Caco-2 (cell line): ENCODE measurements at regions of chr20 and their contacts with region 1.

Region 1: DNA sequence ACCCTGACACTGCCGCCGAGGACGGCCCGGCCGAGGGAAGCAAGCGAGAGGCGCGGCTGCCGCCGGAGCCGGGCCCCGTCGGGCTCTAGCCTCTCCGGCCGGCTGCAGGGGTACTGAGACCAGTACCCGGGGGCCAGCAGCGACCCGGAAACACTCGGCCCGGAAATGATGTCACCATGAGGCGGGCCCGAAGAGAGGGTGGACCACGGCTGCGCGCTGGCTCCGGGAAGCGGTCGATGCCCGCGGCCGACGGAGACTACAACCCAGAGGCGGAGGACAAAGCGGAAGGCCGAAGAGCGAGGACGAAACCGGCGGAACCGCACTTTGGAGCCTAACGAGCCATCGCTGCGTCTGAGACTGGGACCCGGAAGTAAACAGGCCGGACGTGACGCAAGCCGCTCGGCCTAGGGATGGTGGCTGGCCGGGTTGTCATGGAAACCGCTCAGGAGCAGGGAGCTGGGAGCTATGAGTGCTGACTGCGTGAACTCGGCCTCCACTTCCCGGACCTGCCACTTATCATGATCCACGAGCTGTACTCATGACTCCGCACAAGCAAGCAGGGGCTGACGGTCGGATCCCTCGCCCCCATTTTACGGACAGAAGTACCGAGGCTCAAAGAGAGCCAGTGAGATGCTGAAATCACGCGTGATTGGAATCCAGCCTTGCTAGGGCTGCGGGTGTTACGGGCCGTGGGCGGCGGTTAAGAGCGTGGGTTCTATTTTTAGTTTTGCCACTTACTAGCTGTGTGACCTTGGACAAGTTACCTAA is at the start of gene SPATA2:
- DNase-seq: peak; percentile 100
- H3K4me3 ChIP-seq: peak within 1 kb of the TSS; percentile 80
- H3K4me3 Mint-ChIP-seq: peak within 1 kb of the TSS; percentile 99
- H3K27ac Mint-ChIP-seq: peak within 1 kb of the TSS; percentile 100
- H3K4me1 ChIP-seq: peaks cover 20% of the 10 kb centered on the region
- H3K4me1 Mint-ChIP-seq: peaks cover 25% of the 10 kb centered on the region
- H3K27me3 ChIP-seq: no peaks in the 10 kb centered on the region
- H3K27me3 Mint-ChIP-seq: no peaks in the 10 kb centered on the region
- CTCF ChIP-seq: no peak
- total RNA-seq, gene SPATA2: 29.0 TPM in 2 replicates

Region 2: DNA sequence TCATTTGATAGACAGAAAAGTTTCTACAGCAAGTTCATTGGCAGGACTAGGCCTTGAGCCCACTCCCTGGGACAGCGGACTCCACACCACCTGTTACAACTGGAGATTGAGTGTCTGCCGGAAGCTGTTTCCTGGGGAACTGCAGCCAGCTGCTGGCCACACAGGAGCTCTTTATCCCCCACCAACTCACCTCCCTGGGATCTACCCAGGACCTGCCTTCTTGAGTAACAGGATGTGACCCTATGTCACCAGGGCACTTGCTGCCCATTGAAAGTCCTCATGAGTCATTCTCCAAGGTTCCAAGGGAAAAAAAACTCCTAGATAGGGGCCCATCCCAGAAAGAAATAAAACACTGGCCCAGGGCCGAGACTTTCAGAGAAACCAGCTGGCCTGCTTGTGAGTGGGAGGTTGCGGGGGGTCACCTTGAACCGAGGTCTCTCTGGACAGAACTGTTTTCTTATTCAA is 140.3 kb before region 1 on chr20:
- CTCF ChIA-PET with region 1: no interaction called
- POLR2A ChIA-PET with region 1: interaction called, 10 read pairs
- intact Hi-C with region 1: no loop called
- DNase-seq: peak; percentile 68 to 90
- H3K4me3 ChIP-seq: no peak overlapping the region
- H3K4me3 Mint-ChIP-seq: no peak overlapping the region
- H3K27ac Mint-ChIP-seq: no peak overlapping the region
- H3K4me1 ChIP-seq: peaks cover 23% of the 10 kb centered on the region
- H3K4me1 Mint-ChIP-seq: peaks cover 15% of the 10 kb centered on the region
- H3K27me3 ChIP-seq: no peaks in the 10 kb centered on the region
- H3K27me3 Mint-ChIP-seq: no peaks in the 10 kb centered on the region
- CTCF ChIP-seq: no peak

Region 3: GRCh38 chr20:49901588-49901987 is 14.0 kb before region 1 on chr20:
- CTCF ChIA-PET with region 1: interaction called, 7 read pairs
- POLR2A ChIA-PET with region 1: interaction called, 13 read pairs
- intact Hi-C with region 1: no loop called
- DNase-seq: peak in 1 of 2 experiments; percentile 30
- H3K4me3 ChIP-seq: no peak overlapping the region
- H3K4me3 Mint-ChIP-seq: no peak overlapping the region
- H3K27ac Mint-ChIP-seq: no peak overlapping the region
- H3K4me1 ChIP-seq: no peaks in the 10 kb centered on the region
- H3K4me1 Mint-ChIP-seq: no peaks in the 10 kb centered on the region
- H3K27me3 ChIP-seq: no peaks in the 10 kb centered on the region
- H3K27me3 Mint-ChIP-seq: no peaks in the 10 kb centered on the region
- CTCF ChIP-seq: no peak

Region 4: DNA sequence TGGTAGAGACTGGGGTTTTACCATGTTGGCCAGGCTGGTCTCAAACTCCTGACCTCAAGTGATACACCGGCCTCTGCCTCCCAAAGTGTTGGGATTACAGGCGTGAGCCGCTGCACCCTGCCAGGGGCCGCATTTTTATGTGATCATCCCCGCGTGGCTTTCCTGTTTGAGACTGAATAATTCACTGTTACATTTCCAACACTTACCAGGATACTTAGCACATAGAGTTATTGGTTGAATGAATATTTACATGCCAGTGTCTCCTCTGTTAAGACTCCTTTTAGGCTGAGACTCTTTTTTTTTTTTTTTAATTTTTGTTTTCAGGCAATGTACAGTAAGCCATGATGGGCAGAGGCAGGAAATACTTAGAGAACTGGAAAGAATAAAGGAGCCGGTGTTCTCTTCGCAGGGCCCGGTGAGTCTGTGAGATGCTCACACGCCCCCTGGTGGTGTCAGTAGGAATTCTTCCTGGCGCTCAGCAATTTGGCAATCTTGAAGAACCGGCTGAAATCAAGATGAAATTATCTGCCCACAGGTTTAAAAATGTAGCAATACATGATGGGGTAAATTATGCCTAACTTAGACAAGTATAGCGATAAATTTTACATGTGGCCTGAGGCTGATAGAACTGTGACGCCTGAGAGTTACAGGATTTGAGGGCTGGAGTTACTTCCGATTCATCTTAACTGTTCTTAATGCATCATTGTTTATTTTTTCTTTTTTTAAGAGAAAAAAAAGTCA is 13.0 kb after region 1 on chr20:
- CTCF ChIA-PET with region 1: interaction called, 5 read pairs
- POLR2A ChIA-PET with region 1: interaction called, 4 read pairs
- intact Hi-C with region 1: loop called (anchors 1 kb)
- DNase-seq: peak; percentile 90 to 96
- H3K4me3 ChIP-seq: no peak overlapping the region
- H3K4me3 Mint-ChIP-seq: no peak overlapping the region
- H3K27ac Mint-ChIP-seq: no peak overlapping the region
- H3K4me1 ChIP-seq: no peaks in the 10 kb centered on the region; the same call in 1 of the 2 replicates
- H3K4me1 Mint-ChIP-seq: peaks cover 2% of the 10 kb centered on the region
- H3K27me3 ChIP-seq: no peaks in the 10 kb centered on the region
- H3K27me3 Mint-ChIP-seq: no peaks in the 10 kb centered on the region
- CTCF ChIP-seq: peak; percentile 99

Region 5: DNA sequence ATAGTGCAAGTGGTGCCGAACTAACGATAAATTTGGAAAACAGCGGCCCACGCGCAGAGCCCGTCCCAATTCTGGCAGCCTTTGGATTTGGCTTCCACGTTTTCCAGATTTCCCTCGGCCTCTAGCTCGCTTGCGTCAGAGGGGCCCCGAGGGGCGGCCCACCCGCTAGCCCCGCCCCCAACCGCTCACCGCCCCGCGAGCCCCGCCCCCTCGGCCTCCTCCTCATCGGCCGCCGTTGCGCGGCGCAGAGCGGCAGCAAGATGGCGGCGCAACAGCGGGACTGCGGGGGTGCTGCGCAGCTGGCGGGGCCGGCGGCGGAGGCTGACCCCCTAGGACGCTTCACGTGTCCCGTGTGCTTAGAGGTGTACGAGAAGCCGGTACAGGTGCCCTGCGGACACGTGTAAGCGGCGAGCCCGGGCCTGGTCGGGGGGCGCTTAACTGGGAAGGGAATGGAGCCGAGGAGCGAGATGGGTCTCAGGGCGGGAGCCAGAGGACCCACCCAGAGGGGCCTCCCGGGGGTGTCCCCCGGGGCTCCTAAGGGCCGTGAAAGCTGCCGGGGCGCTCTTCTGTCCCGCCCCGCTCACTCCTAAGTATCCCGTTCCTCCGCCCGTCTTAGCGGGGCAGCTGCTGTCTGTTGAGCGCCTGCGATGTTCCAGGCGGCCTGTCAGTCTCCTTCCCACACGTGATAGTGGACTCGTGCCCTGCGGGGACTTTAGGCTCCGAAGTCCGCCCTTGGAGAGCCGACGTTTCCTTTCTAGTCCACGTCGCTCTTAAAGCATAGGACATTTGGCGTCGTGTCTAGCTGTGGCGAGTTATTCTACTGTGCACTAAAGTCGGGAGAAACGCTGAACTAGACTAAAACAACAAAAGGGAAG is 20.8 kb after region 1 on chr20 and contains the start of gene RNF114:
- CTCF ChIA-PET with region 1: interaction called, 33 read pairs
- POLR2A ChIA-PET with region 1: interaction called, 123 read pairs
- intact Hi-C with region 1: loop called (anchors 1 kb)
- DNase-seq: peak; percentile 94 to 98
- H3K4me3 ChIP-seq: peak within 1 kb of the TSS; percentile 87
- H3K4me3 Mint-ChIP-seq: peak within 1 kb of the TSS; percentile 93
- H3K27ac Mint-ChIP-seq: peak within 1 kb of the TSS; percentile 91
- H3K4me1 ChIP-seq: peaks cover 32% of the 10 kb centered on the region
- H3K4me1 Mint-ChIP-seq: peaks cover 38% of the 10 kb centered on the region
- H3K27me3 ChIP-seq: no peaks in the 10 kb centered on the region
- H3K27me3 Mint-ChIP-seq: no peaks in the 10 kb centered on the region
- CTCF ChIP-seq: peak in 1 of 2 experiments; percentile 11
- total RNA-seq, gene RNF114: 146 and 154 TPM in 2 replicates